ENCODE measurements at regions of chr9 and their contacts with region 1.

Region 1: DNA sequence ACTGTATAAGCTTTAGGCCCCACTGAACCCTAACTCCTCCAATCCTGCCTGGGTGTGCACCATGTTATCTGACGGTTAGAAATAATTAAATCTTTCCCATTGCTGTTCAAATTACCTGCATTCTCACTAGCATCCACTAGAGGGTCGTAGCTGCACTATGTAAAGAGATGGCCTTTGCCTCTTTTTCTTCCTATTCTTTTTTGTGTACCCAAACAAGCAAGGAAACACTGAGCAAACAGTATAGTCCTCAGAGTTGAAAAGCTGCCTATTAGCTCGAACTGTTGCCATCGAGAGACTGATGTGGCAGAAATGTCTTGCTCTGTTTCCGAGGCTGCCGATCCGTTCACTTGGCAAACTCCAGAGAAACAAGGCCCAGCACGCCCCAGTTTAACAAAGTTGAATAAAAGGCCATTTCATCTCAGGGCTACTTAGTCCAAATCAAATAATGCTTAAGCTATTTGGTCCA is 163.8 kb upstream of the TRPM3 start:
- DNase-seq: peak; percentile 11
- H3K4me3 ChIP-seq: no peak overlapping the region
- H3K27ac ChIP-seq: no peak overlapping the region
- H3K4me1 ChIP-seq: no peaks in the 10 kb centered on the region
- H3K27me3 ChIP-seq: no peaks in the 10 kb centered on the region
- CTCF ChIP-seq: peak; percentile 73 to 84 (median 78)
- EP300 ChIP-seq: no peak
- POLR2A ChIP-seq: no peak

Region 2: GRCh38 chr9:71783120-71783530 is 497.9 kb after region 1 on chr9:
- in situ Hi-C with region 1: loop called in 1 of 4 experiments (anchors 25 kb)
- intact Hi-C with region 1: no loop called
- DNase-seq: peak; percentile 69
- H3K4me3 ChIP-seq: no peak overlapping the region
- H3K27ac ChIP-seq: peak overlapping the region; percentile 24 to 48 (median 44)
- H3K4me1 ChIP-seq: no peaks in the 10 kb centered on the region
- H3K27me3 ChIP-seq: no peaks in the 10 kb centered on the region
- CTCF ChIP-seq: no peak
- EP300 ChIP-seq: peak; percentile 71
- POLR2A ChIP-seq: peak; percentile 48